Heart left ventricle (tissue), 16 donors: ENCODE measurements at regions of chr19 and their contacts with region 1.

Region 1: DNA sequence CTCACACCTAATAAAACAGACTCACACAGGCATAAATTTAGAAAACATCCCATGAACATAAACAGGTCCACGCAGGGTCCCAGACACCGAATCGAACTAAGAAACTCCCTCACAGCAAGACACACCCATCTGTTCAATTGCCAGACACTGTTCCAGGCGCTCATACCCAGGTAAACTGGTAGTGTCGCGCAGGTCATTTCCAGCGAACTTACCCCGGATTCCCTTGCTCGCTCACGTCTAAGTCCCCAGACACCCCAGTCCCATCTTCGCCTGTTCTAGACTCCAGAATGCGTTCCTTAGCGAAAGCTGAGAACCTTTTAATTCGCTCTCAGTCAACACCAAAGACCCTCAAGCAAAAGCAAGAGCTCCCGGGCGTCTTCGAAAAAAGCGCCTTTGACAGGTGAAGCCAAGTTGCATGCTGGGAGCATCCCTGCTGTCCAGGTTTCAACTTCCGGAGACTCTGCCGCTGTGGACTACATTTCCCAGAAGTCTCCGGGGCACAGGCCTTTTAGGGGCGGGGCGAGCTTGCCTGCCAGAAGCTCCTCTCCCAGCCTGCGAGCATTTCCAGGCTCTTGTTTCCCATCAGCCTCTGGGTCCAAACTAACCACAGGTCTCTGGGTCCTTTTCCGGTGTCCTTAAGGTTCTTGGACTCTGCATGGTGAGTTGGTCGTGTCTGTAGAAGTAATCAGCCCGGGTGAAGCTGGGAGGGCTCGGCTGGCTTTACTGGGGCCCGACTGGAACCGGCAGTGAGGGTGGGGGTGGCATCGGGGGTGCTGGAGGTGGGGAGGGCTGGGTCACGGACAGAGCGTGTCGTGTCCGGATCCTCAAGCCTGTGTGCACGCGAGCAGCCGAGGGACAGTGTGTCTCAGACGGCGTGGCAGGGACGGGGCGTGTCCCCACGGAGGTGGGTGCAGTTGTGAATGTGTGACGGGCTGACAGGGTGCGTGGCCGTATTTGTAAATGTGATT is at the start of gene ZNF283:
- DNase-seq: peak; percentile 89 to 95 (median 91)
- ATAC-seq: peak; percentile 99 to 100 (median 100)
- H3K4me3 ChIP-seq: peak within 1 kb of the TSS; percentile 32 to 78 (median 70)
- H3K27ac ChIP-seq: peak within 1 kb of the TSS in 11 of 12 donors; percentile 0 to 83 (median 72)
- H3K4me1 ChIP-seq: peaks cover 0 to 14% (median 7%) of the 10 kb centered on the region in 12 donors
- H3K27me3 ChIP-seq: peaks cover 0 to 3% (median 0%) of the 10 kb centered on the region in 9 donors
- CTCF ChIP-seq: no peak
- POLR2A ChIP-seq: peak in 1 of 2 donors; percentile 21
- total RNA-seq, gene ZNF283: 4.6 to 13.4 (median 11.9) TPM

Region 2: GRCh38 chr19:43668406-43669158 is 158.5 kb before region 1 on chr19:
- intact Hi-C with region 1: no loop called
- DNase-seq: peak; percentile 98 to 99 (median 99)
- ATAC-seq: peak; percentile 91 to 95 (median 92)
- H3K4me3 ChIP-seq: peak overlapping the region; percentile 53 to 83 (median 66)
- H3K27ac ChIP-seq: peak overlapping the region; percentile 78 to 94 (median 92)
- H3K4me1 ChIP-seq: peaks cover 0 to 75% (median 18%) of the 10 kb centered on the region in 12 donors
- H3K27me3 ChIP-seq: no peaks in the 10 kb centered on the region
- CTCF ChIP-seq: no peak
- POLR2A ChIP-seq: peak in 1 of 2 donors; percentile 88

Region 3: GRCh38 chr19:43901395-43902390 is 74.6 kb after region 1 on chr19:
- intact Hi-C with region 1: loop called in 2 of 10 experiments (anchors 1 to 5 kb)
- DNase-seq: peak; percentile 88 to 91 (median 89)
- ATAC-seq: peak; percentile 98 to 100 (median 100)
- H3K4me3 ChIP-seq: peak overlapping the region; percentile 45 to 82 (median 64)
- H3K27ac ChIP-seq: peak overlapping the region in 9 of 12 donors; percentile 38 to 66 (median 55)
- H3K4me1 ChIP-seq: peaks cover 0 to 21% (median 8%) of the 10 kb centered on the region in 12 donors
- H3K27me3 ChIP-seq: no peaks in the 10 kb centered on the region
- CTCF ChIP-seq: no peak
- POLR2A ChIP-seq: no peak